WTC11 (cell line): ENCODE measurements at regions of chr11 and their contacts with region 1.

Region 1: DNA sequence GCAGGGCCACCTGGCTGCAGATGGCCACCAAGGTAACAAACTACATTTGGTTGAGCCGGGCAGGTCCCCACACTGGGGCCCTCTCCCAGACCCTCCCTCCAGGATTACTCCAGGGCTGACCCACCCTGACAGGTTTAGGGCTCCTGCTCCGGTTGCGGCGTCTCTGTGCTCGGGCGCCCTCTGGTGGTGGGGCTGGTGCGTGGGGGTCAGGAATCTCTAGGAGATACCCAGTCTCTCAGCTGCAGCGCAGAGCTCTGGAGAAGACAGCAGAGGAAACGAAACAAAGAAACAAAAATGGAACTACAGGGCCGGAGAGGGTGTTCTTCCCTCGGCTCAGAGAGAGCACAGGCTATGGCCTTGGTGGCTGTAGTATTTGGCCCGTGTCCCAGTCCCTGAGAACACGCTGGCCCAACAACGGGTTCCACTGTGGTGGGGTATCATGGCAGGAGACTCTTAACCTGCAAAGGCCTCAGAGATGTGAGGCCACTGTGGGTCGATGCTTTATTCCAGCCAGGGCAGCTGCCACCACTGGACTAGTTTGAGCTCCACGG is 2.4 kb downstream of the C11orf96 start:
- DNase-seq: peak; percentile 92
- ATAC-seq: peak; percentile 33
- H3K4me3 Mint-ChIP-seq: peak overlapping the region; percentile 92
- H3K27ac Mint-ChIP-seq: no peak overlapping the region
- H3K4me1 Mint-ChIP-seq: peaks cover 33% of the 10 kb centered on the region
- H3K27me3 Mint-ChIP-seq: peaks cover 63% of the 10 kb centered on the region
- CTCF ChIP-seq: peak; percentile 92

Region 2: GRCh38 chr11:43920598-43921419 is 24.0 kb before region 1 on chr11:
- CTCF ChIA-PET with region 1: interaction called, 20 read pairs
- POLR2A ChIA-PET with region 1: no interaction called
- DNase-seq: no peak
- ATAC-seq: no peak
- H3K4me3 Mint-ChIP-seq: no peak overlapping the region
- H3K27ac Mint-ChIP-seq: peak overlapping the region; percentile 63; the same call in 1 of the 2 replicates
- H3K4me1 Mint-ChIP-seq: peaks cover 8% of the 10 kb centered on the region
- H3K27me3 Mint-ChIP-seq: no peaks in the 10 kb centered on the region
- CTCF ChIP-seq: no peak

Region 3: GRCh38 chr11:43955381-43956118 is 10.7 kb after region 1 on chr11:
- CTCF ChIA-PET with region 1: interaction called, 17 read pairs
- POLR2A ChIA-PET with region 1: no interaction called
- DNase-seq: no peak
- ATAC-seq: no peak
- H3K4me3 Mint-ChIP-seq: no peak overlapping the region
- H3K27ac Mint-ChIP-seq: 0 out of 2 replicates have a peak overlapping the region, but pooled peaks have one; percentile 88
- H3K4me1 Mint-ChIP-seq: peaks cover 67% of the 10 kb centered on the region
- H3K27me3 Mint-ChIP-seq: peaks cover 3% of the 10 kb centered on the region; the same call in 1 of the 2 replicates
- CTCF ChIP-seq: no peak

Region 4: DNA sequence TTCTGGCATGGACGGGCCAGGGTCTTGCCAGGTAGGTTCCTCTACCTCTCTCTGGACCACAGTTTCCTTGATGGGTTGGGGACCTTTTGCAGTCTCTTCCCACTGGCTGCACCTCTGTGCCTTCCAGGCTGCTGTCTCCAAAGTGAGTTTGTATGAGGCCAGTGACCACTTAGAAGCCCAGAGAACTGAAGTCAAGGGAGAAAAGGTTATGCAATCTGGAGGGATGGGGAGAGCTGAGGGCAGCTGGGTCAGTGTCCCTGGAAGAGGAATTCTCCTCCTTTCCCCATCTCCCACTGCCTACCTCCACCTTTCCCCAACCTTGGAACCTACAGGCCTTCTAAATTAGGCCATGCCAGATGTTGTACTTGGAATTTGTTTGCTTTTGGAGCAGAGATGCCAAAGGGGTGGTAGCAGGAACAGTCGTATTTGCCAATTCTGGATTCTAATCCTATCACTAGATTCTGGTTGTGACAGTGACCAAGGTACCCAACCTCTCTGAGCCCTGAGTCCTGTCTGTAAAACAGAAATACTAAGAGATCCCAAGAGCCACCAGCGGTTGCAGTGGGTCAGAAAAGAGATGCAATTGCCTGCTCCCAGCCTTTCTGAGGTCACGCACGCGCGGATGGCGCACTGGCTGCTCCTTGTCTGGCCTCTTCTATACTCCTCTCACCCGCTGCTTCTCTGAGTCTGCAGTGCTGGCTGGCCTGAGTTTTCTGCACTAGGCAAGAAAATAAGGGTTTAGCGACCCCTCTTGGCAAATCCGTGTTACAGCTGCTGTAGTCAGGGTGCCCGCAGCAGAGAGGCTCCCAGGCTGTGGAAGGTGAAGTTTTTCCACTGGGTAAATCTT is 92.2 kb after region 1 on chr11:
- CTCF ChIA-PET with region 1: interaction called, 16 read pairs
- POLR2A ChIA-PET with region 1: no interaction called
- DNase-seq: peak; percentile 81
- ATAC-seq: peak; percentile 98
- H3K4me3 Mint-ChIP-seq: no peak overlapping the region
- H3K27ac Mint-ChIP-seq: no peak overlapping the region
- H3K4me1 Mint-ChIP-seq: no peaks in the 10 kb centered on the region
- H3K27me3 Mint-ChIP-seq: peaks cover 2% of the 10 kb centered on the region
- CTCF ChIP-seq: peak; percentile 48; the same call in 1 of the 2 replicates

Region 5: DNA sequence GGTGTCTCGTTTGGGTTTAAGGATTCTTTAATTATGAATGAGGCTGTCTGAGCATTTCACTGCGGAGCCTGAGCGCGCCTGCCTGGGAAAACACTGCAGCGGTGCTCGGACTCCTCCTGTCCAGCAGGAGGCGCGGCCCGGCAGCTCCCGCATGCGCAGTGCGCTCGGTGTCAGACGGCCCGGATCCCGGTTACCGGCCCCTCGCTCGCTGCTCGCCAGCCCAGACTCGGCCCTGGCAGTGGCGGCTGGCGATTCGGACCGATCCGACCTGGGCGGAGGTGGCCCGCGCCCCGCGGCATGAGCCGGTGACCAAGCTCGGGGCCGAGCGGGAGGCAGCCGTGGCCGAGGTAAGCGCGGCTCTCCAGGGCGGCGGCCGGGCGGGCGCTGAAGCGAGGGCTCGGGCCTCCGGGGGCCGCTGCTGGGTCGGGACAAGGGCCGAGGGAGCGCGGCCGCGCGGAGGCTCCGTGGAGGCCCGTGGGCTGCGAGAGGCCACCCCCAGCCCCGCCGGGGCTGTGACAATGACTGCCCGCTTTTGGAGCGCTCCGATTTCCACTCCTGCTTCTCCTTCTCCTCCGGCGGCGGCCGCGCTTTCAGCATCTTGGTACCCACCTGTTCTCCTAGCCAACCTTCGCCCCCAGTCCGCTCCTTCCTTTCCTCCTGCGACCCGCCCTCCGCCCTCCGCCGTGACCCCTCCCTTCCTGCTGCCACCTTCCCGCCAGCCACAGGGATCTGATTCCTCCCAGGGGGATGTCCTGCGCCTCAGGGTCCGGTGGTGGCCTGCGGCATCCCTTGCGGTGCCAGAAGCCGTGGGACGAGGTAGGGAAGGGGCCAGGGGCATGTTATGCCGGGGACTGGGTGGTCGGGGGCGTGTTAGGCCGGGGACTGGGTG is 150.9 kb after region 1 on chr11 and contains the start of gene EXT2:
- CTCF ChIA-PET with region 1: interaction called, 13 read pairs
- POLR2A ChIA-PET with region 1: no interaction called
- DNase-seq: peak; percentile 91
- ATAC-seq: peak; percentile 89
- H3K4me3 Mint-ChIP-seq: peak within 1 kb of the TSS; percentile 75
- H3K27ac Mint-ChIP-seq: no peak within 1 kb of the TSS
- H3K4me1 Mint-ChIP-seq: peaks cover 16% of the 10 kb centered on the region
- H3K27me3 Mint-ChIP-seq: peaks cover 3% of the 10 kb centered on the region
- CTCF ChIP-seq: peak; percentile 70
- total RNA-seq, gene EXT2: 36.4 to 39.1 TPM (median 38.6 TPM) in 3 replicates